ENCODE measurements at regions of chr4 and their contacts with region 1.

Region 1: DNA sequence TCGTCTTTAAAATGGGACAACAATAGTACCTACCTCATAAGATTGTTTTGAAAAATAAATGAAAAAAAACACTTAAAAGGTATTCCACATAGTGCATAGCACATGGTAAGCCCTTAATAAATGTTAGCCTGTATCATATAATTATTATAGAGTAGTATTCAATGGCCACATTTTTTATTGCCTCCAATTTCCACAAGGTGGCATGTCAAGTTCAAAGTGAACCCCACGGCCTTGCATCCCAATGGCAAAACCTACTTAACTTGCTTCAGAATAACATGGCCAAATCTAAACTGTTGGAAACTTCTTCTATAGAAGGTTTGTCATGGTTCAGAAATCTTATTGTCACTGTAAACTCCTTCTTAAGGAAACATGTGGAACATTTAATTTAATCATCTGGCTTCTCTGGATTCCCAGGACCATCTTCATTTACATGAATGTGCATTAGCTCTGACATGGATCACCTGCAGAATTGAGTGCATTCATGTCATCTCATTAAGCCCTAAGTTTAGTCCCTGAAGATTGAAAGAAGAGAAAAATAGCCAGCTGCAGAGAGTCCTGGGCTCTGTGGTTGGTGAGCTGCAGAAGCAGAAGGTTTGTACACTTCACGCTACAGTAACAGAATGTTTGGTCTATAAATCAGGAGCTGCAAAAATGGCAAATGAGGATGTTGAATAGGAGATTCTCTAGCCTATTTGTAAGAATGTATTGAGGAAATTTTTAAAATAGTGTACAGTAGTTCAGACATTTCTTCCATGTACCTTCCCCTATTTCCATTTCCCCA is 61.0 kb downstream of the ANXA3 start:
- DNase-seq: peak in 2 of 4 experiments; percentile 46 to 74
- ATAC-seq: peak; percentile 71
- H3K4me3 ChIP-seq: no peak overlapping the region
- H3K27ac ChIP-seq: no peak overlapping the region
- H3K4me1 ChIP-seq: peaks cover 18 to 77% of the 10 kb centered on the region in 2 experiments
- H3K27me3 ChIP-seq: no peaks in the 10 kb centered on the region
- CTCF ChIP-seq: peak; percentile 56 to 83 (median 66)
- EP300 ChIP-seq: no peak
- POLR2A ChIP-seq: no peak
- RAD21 ChIP-seq: peak; percentile 80 to 82

Region 2: DNA sequence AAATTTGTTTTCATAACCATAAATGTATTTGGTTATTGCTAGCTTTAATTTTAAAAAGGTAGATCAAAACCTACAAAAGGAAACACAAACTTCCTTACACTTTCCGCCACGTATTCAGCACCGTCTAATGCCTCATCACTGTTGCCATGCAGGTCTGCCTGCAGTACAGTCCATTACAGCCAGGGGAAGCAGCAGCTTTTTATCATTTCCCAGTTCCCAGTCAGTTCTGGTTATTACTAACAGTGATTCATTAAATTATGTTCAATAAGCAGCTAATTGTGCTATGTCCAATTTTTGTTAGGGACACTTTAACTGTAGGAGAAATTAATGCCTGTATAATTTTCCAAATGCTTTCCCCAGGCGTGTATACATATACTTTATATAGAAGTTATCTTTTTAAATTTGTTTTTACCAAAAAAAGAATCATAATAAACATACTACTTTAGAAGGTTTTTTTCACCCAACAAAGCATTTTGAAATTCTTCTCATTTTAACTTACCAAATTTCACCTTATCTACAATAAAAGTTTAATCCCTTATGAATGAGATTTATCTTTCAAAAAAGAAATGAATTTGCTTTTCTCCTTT is 32.2 kb after region 1 on chr4:
- CTCF ChIA-PET with region 1: no interaction called
- POLR2A ChIA-PET with region 1: no interaction called
- in situ Hi-C with region 1: no loop called
- intact Hi-C with region 1: loop called (anchors 2 kb)
- DNase-seq: peak; percentile 69 to 87 (median 71)
- ATAC-seq: peak; percentile 91
- H3K4me3 ChIP-seq: no peak overlapping the region
- H3K27ac ChIP-seq: peak overlapping the region; percentile 79; the same call in 1 of the 3 replicates
- H3K4me1 ChIP-seq: peaks cover 31 to 52% of the 10 kb centered on the region in 2 experiments
- H3K27me3 ChIP-seq: no peaks in the 10 kb centered on the region
- CTCF ChIP-seq: peak; percentile 79 to 90 (median 88)
- EP300 ChIP-seq: no peak
- POLR2A ChIP-seq: no peak
- RAD21 ChIP-seq: peak; percentile 75 to 80

Region 3: DNA sequence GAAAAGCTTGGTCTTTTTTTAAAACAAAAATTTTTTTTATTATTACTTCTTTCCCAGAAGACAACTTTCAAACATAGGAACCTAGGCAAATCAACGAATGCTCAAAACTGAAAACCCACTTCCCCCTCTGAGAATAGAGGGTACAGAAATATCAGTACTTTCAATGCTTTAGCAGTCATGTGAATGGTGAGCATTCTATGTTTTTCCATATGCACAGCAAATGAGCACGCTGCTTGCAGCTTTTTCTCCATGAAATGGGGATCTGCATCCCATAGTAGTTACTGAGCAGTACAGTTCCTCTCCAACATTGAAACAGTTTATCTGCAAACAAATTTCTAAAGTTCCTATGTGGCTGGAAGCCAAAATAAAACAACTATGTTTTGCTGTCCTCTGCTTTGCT is 55.2 kb after region 1 on chr4:
- CTCF ChIA-PET with region 1: no interaction called
- POLR2A ChIA-PET with region 1: no interaction called
- in situ Hi-C with region 1: no loop called
- intact Hi-C with region 1: loop called (anchors 1 kb)
- DNase-seq: no peak
- ATAC-seq: no peak
- H3K4me3 ChIP-seq: no peak overlapping the region
- H3K27ac ChIP-seq: no peak overlapping the region
- H3K4me1 ChIP-seq: peaks cover 28 to 69% of the 10 kb centered on the region in 2 experiments
- H3K27me3 ChIP-seq: no peaks in the 10 kb centered on the region
- CTCF ChIP-seq: no peak
- EP300 ChIP-seq: no peak
- POLR2A ChIP-seq: no peak
- RAD21 ChIP-seq: no peak

Region 4: DNA sequence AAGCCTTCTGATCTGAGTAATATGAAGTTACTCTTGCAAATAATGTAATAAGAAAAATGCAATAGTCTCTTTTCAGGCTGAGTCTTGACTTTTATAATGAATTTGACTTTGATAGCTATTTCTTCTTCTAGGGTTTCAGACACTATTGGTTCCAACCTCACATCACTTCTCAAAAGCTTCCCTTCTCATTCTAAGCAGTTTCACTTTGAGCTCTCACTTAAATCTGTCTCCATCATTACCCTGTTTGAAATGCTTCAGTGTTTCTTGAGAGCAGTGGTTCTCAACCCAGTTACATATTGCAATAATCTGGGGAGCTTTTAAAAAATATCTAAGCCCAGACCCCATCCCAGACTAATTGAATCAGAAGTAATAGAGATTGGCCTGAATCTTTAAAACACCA is 123.1 kb after region 1 on chr4:
- CTCF ChIA-PET with region 1: no interaction called
- POLR2A ChIA-PET with region 1: no interaction called
- in situ Hi-C with region 1: no loop called
- intact Hi-C with region 1: loop called (anchors 5 kb)
- DNase-seq: no peak
- ATAC-seq: no peak
- H3K4me3 ChIP-seq: no peak overlapping the region
- H3K27ac ChIP-seq: no peak overlapping the region
- H3K4me1 ChIP-seq: peaks cover 22 to 67% of the 10 kb centered on the region in 2 experiments
- H3K27me3 ChIP-seq: no peaks in the 10 kb centered on the region
- CTCF ChIP-seq: no peak
- EP300 ChIP-seq: no peak
- POLR2A ChIP-seq: no peak
- RAD21 ChIP-seq: no peak

Region 5: GRCh38 chr4:78864405-78865024 is 251.9 kb after region 1 on chr4:
- CTCF ChIA-PET with region 1: interaction called, 8 read pairs
- POLR2A ChIA-PET with region 1: no interaction called
- in situ Hi-C with region 1: no loop called
- intact Hi-C with region 1: loop called (anchors 1 kb)
- DNase-seq: peak; percentile 24 to 75 (median 42)
- ATAC-seq: peak; percentile 81
- H3K4me3 ChIP-seq: no peak overlapping the region
- H3K27ac ChIP-seq: no peak overlapping the region
- H3K4me1 ChIP-seq: no peaks in the 10 kb centered on the region
- H3K27me3 ChIP-seq: no peaks in the 10 kb centered on the region
- CTCF ChIP-seq: peak; percentile 48 to 79 (median 57); a peak in 5 of 6 replicates
- EP300 ChIP-seq: no peak
- POLR2A ChIP-seq: no peak
- RAD21 ChIP-seq: peak; percentile 61 to 75

Region 6: GRCh38 chr4:79325864-79326328 is 713.3 kb after region 1 on chr4 and contains the start of gene NAA11:
- CTCF ChIA-PET with region 1: no interaction called
- POLR2A ChIA-PET with region 1: no interaction called
- in situ Hi-C with region 1: no loop called
- intact Hi-C with region 1: no loop called
- DNase-seq: peak; percentile 67 to 79 (median 74)
- ATAC-seq: peak; percentile 88
- H3K4me3 ChIP-seq: peak within 1 kb of the TSS; percentile 53
- H3K27ac ChIP-seq: peak within 1 kb of the TSS; percentile 77
- H3K4me1 ChIP-seq: peaks cover 0 to 7% of the 10 kb centered on the region in 2 experiments; a peak in 4 of 5 replicates
- H3K27me3 ChIP-seq: no peaks in the 10 kb centered on the region
- CTCF ChIP-seq: no peak
- EP300 ChIP-seq: no peak
- POLR2A ChIP-seq: peak; percentile 70
- RAD21 ChIP-seq: no peak
- polyA plus RNA-seq, gene NAA11: 17.1 to 22.7 TPM

Measured in K562 (cell line).